Naive thymus-derived CD4-positive, alpha-beta T cell (primary cell): ENCODE measurements at regions of chr1 and their contacts with region 1.

Region 1: GRCh38 chr1:25971066-25971810 is 26.6 kb downstream of the PAFAH2 start:
- DNase-seq: peak in 7 of 9 donors; percentile 60 to 77 (median 69)
- ATAC-seq: peak; percentile 88
- H3K4me3 ChIP-seq: peak overlapping the region; percentile 34
- H3K4me3 Mint-ChIP-seq: peak overlapping the region; percentile 21 to 80 (median 61)
- H3K27ac ChIP-seq: peak overlapping the region; percentile 61
- H3K27ac Mint-ChIP-seq: peak overlapping the region; percentile 74 to 93 (median 85)
- H3K4me1 ChIP-seq: peaks cover 0 to 23% of the 10 kb centered on the region in 2 donors
- H3K4me1 Mint-ChIP-seq: peaks cover 33 to 74% (median 52%) of the 10 kb centered on the region in 7 donors
- H3K27me3 ChIP-seq: no peaks in the 10 kb centered on the region
- H3K27me3 Mint-ChIP-seq: no peaks in the 10 kb centered on the region

Region 2: DNA sequence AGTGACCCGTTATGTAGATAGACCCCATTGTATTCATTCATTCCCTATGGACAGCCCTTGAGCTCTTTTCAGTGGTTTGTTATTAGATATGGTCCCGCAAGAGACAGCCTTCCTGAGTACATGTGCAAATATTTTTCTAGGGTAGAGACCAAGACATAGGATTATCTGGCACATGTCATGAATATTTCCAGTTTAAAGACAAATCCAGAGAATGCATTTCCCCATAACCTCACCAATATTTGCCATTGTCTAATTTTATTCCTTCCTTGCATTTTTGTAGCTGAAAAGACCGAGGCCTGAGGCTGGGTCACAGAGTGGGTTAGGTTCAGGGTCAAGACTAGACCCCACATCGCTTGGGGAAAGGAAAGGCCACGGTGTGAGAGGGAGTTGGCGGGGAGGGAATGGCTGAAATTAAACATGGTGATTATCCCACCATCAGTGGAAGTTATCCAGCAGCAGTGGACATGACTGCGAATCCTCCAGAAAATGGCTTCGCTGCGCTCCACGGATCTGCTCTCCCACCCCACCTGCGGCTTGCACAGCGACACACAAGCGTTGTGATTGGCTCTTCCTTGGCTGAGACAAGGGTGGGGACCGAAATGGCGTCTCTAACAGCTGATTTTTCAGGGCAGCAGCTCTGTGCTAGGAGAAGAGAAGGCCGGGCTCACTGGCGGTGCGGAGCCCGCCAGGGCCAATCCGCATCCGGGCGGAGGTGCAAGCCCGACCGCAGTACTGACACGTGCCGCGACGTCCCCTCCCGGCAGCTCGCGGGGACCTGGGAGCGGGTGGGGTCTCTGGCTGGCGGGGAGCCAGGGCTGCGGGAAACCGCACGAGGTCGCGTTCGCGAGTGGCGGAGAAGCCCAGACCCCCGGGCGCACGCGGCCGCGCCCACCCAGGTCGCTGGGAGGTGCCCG is 48.9 kb before region 1 on chr1:
- CTCF ChIA-PET with region 1: interaction called, 3 read pairs
- POLR2A ChIA-PET with region 1: interaction called, 11 read pairs
- intact Hi-C with region 1: loop called in 1 of 2 experiments (anchors 2 kb)
- DNase-seq: peak; percentile 26 to 64 (median 57)
- ATAC-seq: peak; percentile 84
- H3K4me3 ChIP-seq: peak overlapping the region; percentile 79
- H3K4me3 Mint-ChIP-seq: peak overlapping the region; percentile 78 to 91 (median 88)
- H3K27ac ChIP-seq: peak overlapping the region; percentile 60
- H3K27ac Mint-ChIP-seq: peak overlapping the region; percentile 31 to 90 (median 82)
- H3K4me1 ChIP-seq: peaks cover 19 to 20% of the 10 kb centered on the region in 2 donors
- H3K4me1 Mint-ChIP-seq: peaks cover 23 to 56% (median 43%) of the 10 kb centered on the region in 7 donors
- H3K27me3 ChIP-seq: no peaks in the 10 kb centered on the region
- H3K27me3 Mint-ChIP-seq: peaks cover 0 to 57% (median 0%) of the 10 kb centered on the region in 5 donors

Region 3: GRCh38 chr1:25936947-25937346 is 34.3 kb before region 1 on chr1:
- CTCF ChIA-PET with region 1: no interaction called
- POLR2A ChIA-PET with region 1: interaction called, 7 read pairs
- intact Hi-C with region 1: loop called in 1 of 2 experiments (anchors 5 kb)
- DNase-seq: no peak
- ATAC-seq: no peak
- H3K4me3 ChIP-seq: no peak overlapping the region
- H3K4me3 Mint-ChIP-seq: no peak overlapping the region
- H3K27ac ChIP-seq: no peak overlapping the region
- H3K27ac Mint-ChIP-seq: no peak overlapping the region
- H3K4me1 ChIP-seq: no peaks in the 10 kb centered on the region
- H3K4me1 Mint-ChIP-seq: peaks cover 0 to 6% (median 0%) of the 10 kb centered on the region in 7 donors
- H3K27me3 ChIP-seq: no peaks in the 10 kb centered on the region
- H3K27me3 Mint-ChIP-seq: peaks cover 0 to 9% (median 0%) of the 10 kb centered on the region in 5 donors